Vagina (tissue), 2 donors: ENCODE measurements at regions of chr15 and their contacts with region 1.

Region 1: GRCh38 chr15:38576837-38577236 is 12.2 kb upstream of the RASGRP1 start:
- DNase-seq: no peak
- H3K4me3 ChIP-seq: no peak overlapping the region
- H3K27ac ChIP-seq: no peak overlapping the region
- H3K4me1 ChIP-seq: no peaks in the 10 kb centered on the region
- H3K27me3 ChIP-seq: no peaks in the 10 kb centered on the region
- CTCF ChIP-seq: no peak
- POLR2A ChIP-seq: no peak

Region 2: DNA sequence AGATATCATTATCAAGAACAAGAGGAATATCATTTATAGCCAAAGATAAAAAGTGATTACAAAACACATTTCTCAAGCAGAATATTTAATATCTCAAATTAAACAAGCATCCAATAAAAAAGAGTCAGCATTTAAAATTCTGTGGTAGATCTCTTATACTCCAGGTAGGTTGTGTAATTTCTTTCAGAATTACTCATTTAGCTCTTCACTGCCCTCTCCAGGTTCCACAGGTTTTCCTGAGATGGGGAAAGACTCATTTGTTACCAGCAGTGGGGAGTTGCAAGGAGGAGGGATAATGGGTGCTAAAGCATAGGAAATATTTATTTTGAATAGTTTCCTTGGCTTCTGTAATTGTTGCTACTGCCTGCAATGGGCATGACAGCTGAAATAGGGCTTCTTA is 70.8 kb after region 1 on chr15:
- intact Hi-C with region 1: loop called (anchors 2 kb)
- DNase-seq: no peak
- H3K4me3 ChIP-seq: no peak overlapping the region
- H3K27ac ChIP-seq: no peak overlapping the region
- H3K4me1 ChIP-seq: peaks cover 4% of the 10 kb centered on the region
- H3K27me3 ChIP-seq: no peaks in the 10 kb centered on the region
- CTCF ChIP-seq: no peak
- POLR2A ChIP-seq: no peak

Region 3: GRCh38 chr15:38894243-38894948 is 317.6 kb after region 1 on chr15:
- intact Hi-C with region 1: no loop called
- DNase-seq: no peak
- H3K4me3 ChIP-seq: no peak overlapping the region
- H3K27ac ChIP-seq: no peak overlapping the region
- H3K4me1 ChIP-seq: peaks cover 12% of the 10 kb centered on the region
- H3K27me3 ChIP-seq: no peaks in the 10 kb centered on the region
- CTCF ChIP-seq: no peak
- POLR2A ChIP-seq: no peak